ENCODE measurements at regions of chr3 and their contacts with region 1.

Region 1: GRCh38 chr3:17645072-17645698 is 97.2 kb downstream of the TBC1D5 start:
- DNase-seq: no peak
- H3K4me3 ChIP-seq: no peak overlapping the region
- H3K27ac ChIP-seq: no peak overlapping the region
- H3K4me1 ChIP-seq: peaks cover 0 to 15% of the 10 kb centered on the region in 2 donors
- H3K27me3 ChIP-seq: no peaks in the 10 kb centered on the region
- CTCF ChIP-seq: peak; percentile 13 to 63 (median 50)

Region 2: DNA sequence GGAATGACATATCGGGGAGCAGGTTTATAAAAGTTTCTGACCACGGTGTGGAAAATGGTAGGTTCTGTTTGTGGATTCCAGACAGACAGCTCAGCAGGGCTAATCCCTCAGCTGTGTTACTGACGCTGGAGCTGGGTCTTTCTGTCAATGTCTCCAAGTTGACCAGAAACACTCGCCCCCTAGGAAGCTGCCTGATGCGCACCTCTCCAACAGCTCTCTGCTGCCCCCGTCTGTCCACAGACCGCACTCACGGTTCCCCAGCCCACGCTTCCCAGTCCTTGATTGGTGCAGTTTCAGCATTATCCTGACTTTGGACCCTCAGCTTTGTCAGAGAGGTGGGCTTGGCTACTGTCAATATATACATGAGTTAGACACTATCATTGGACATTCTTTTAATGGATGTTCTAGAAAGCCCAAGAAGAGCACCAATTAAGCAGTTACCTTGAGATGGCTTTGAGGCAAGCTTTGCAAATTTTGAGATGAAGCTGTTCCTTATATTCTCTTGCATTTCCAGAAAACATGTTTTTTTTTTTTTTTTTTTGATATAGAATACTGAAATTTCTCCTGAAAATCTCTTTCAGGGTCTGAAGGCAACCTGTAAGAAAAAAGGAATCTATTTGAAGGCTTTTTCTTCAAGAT is 196.1 kb after region 1 on chr3:
- intact Hi-C with region 1: loop called (anchors 2 kb)
- DNase-seq: peak in 1 of 2 donors; percentile 78
- H3K4me3 ChIP-seq: no peak overlapping the region
- H3K27ac ChIP-seq: no peak overlapping the region
- H3K4me1 ChIP-seq: no peaks in the 10 kb centered on the region
- H3K27me3 ChIP-seq: no peaks in the 10 kb centered on the region
- CTCF ChIP-seq: peak; percentile 83 to 97 (median 92)